ENCODE measurements at regions of chr6 and their contacts with region 1.

Region 1: GRCh38 chr6:19279273-19279684 is 557.9 kb upstream of the ID4 start:
- DNase-seq: no peak
- ATAC-seq: no peak
- H3K4me3 ChIP-seq: no peak overlapping the region
- H3K27ac ChIP-seq: no peak overlapping the region
- H3K4me1 ChIP-seq: peaks cover 11% of the 10 kb centered on the region
- H3K27me3 ChIP-seq: no peaks in the 10 kb centered on the region
- CTCF ChIP-seq: no peak

Region 2: GRCh38 chr6:19210849-19211590 is 68.3 kb before region 1 on chr6:
- CTCF ChIA-PET with region 1: no interaction called
- POLR2A ChIA-PET with region 1: interaction called, 19 read pairs
- intact Hi-C with region 1: no loop called
- DNase-seq: peak; percentile 5
- ATAC-seq: no peak
- H3K4me3 ChIP-seq: no peak overlapping the region
- H3K27ac ChIP-seq: no peak overlapping the region
- H3K4me1 ChIP-seq: peaks cover 14% of the 10 kb centered on the region
- H3K27me3 ChIP-seq: no peaks in the 10 kb centered on the region
- CTCF ChIP-seq: peak; percentile 46

Region 3: DNA sequence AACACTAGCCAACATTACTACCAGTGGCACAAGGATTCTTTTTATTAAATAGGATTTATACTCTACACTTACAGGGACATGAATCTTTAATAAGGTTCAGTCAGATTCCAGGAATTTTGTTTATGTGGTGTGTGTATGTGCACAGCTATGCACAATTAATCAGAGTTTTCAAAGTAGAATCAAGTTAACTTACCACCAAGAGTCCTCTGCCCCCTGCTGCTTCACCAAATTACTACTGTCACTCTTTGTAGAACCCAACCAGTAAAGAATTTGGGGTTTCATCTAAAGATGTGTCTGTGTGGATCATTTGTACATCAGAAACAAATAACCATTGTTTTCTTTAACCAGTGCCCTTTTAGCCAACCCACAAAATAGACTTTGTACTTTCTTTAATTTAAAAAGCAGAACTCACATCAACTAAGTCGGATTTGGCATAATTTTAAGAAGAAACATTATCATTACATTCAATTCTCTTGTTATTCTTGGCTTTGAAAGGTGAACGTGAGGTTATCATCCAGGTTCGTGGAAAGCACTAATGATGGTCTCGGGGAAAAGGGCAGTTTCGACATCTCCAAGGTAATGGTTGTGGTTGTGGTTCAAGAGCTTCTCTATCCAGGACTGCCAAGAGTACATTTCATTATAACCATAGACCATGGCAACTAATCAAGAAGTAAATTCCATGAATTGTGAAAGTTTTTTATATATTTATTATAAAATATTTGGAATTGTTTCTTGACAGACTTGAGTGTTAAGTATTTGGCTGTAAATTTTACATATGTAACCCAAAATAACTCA is 43.6 kb after region 1 on chr6:
- CTCF ChIA-PET with region 1: no interaction called
- POLR2A ChIA-PET with region 1: no interaction called
- intact Hi-C with region 1: no loop called
- DNase-seq: peak; percentile 48
- ATAC-seq: no peak
- H3K4me3 ChIP-seq: no peak overlapping the region
- H3K27ac ChIP-seq: no peak overlapping the region
- H3K4me1 ChIP-seq: no peaks in the 10 kb centered on the region
- H3K27me3 ChIP-seq: no peaks in the 10 kb centered on the region
- CTCF ChIP-seq: peak; percentile 57

Region 4: DNA sequence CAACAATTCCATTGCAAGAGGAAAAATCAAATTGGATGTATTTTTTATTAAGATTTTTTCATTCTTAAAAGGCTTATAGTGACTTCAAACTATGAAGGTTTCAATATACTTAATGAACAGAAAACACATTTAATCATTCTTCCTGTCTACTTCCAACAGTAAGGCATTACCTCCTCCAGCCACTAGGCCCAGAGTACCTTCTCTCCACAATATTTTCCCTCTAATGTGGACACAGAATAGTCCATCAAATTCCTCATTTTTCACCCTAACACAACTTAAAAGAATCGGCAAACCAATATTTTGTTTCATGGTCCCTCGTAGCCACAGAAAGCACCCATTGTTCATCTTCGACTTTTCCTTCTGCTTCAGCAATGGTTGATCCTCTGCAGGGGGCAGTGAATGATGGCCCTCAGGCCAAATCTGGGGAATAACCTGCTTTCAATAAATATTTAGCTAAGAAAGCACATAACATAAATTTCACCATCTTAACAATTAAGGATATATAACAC is 222.5 kb after region 1 on chr6:
- CTCF ChIA-PET with region 1: no interaction called
- POLR2A ChIA-PET with region 1: no interaction called
- intact Hi-C with region 1: no loop called
- DNase-seq: no peak
- ATAC-seq: no peak
- H3K4me3 ChIP-seq: no peak overlapping the region
- H3K27ac ChIP-seq: no peak overlapping the region
- H3K4me1 ChIP-seq: no peaks in the 10 kb centered on the region
- H3K27me3 ChIP-seq: no peaks in the 10 kb centered on the region
- CTCF ChIP-seq: peak; percentile 27; the same call in 1 of the 2 replicates

Measured in PC-3 (cell line).